ENCODE measurements at regions of chr2 and their contacts with region 1.

Region 1: DNA sequence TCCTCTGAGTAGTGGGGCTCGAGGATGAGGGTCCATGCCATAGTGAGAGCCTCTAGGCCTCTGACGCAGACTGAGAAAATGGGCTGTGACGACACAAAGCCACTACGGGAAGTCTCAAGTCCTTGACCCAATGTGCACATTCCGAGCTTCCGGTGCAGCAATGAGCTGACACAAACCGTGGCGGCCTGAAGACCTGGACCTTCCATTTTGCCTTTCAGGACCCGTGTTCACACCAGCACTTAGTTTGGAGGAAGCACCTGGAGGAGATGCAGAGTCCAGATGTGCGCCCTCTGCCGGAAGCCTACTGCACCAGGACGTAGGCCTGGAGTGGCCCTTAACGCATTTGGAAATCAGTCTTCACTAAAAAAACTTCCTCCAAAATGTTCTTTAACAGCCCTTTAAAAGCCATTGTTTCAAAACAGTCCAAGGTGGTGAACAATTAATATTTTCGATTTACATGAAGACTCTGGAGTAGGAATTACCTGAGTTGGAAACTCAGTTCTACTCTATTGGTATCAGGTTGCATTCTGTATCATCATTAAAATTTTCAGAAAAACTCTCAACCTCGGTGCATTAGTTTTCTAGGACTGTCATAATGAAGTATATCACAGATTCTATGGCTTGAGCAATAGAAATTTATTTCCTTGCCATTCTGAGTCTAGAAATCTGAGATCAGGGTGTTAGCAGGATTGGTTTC is 33.9 kb downstream of the BMP10 start:
- DNase-seq: peak; percentile 67 to 91 (median 85)
- ATAC-seq: peak; percentile 40 to 53
- H3K4me3 ChIP-seq: no peak overlapping the region
- H3K27ac ChIP-seq: no peak overlapping the region
- H3K4me1 ChIP-seq: no peaks in the 10 kb centered on the region
- H3K27me3 ChIP-seq: no peaks in the 10 kb centered on the region

Region 2: DNA sequence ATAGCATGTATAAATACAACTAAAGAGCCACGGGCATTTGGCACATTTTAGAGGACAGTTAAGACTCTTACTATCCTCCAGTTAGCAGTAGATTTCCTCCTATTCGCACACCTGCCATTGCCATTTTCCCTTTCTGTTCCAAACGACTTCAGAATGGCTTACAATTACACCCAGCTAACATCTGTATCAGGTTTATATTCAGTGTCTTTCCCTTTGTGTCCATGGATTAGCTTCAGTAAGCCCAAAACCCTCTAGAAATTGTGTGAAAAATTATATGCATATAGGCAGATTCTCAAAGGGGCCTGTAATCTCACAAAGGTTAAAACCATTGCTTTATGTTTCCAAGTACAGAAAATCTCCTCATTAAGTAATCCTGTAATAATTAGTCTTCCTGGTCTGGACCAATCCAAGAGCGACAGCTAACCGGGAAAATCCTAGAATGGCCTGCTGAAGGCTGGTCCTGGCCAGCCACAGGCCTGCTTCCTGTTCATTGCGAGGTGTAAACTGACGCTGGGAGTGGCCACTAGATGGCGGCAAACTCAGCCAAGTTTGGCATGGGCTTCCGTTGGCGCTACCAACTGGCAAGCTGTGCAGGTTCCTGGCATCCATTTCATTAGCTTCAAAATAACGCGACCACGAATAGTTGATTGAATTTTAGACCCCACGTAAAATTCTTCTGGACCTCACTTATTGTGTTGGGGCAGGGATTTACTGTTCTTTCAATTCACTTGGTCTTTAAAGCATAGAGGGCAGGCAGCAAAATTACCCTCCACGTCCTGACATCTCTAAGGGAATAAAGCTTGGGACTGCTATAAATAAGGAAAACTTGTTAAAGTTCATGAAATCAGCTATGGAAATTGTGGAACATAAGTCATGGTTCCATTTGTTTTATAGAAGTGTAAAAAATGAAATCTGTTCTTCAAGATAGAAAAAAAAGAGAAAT is 85.6 kb before region 1 on chr2:
- intact Hi-C with region 1: loop called in 2 of 4 experiments (anchors 2 to 5 kb)
- DNase-seq: peak; percentile 91 to 95 (median 94)
- ATAC-seq: peak; percentile 92
- H3K4me3 ChIP-seq: no peak overlapping the region
- H3K27ac ChIP-seq: no peak overlapping the region
- H3K4me1 ChIP-seq: peaks cover 2% of the 10 kb centered on the region
- H3K27me3 ChIP-seq: no peaks in the 10 kb centered on the region

Measured in right cardiac atrium (tissue), 5 donors.